ENCODE measurements at regions of chr14 and their contacts with region 1.

Region 1: GRCh38 chr14:91996948-91997371 is 42.9 kb downstream of the TRIP11 start:
- DNase-seq: peak; percentile 26
- H3K4me3 ChIP-seq: no peak overlapping the region
- H3K27ac ChIP-seq: no peak overlapping the region
- H3K27me3 ChIP-seq: no peaks in the 10 kb centered on the region
- CTCF ChIP-seq: peak; percentile 78

Region 2: DNA sequence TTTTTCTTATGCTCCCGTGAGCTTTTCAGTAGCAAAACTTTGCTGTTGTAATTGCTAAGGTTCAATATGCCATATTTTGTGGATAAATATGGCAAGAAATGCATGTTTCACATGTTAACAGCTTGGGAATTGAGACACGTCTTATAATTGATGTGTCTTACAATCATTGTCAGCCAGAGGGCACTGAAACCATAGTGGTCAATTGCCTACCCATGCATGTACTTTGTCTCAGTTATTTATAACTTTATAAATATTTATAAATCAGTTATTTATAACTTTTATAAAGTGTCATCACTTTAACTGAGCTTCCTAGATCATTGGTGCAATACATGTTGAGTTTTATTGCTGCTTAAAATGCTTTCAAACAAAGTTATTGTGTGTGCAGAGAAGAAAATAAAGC is 347.0 kb before region 1 on chr14:
- CTCF ChIA-PET with region 1: interaction called, 12 read pairs
- POLR2A ChIA-PET with region 1: no interaction called
- DNase-seq: no peak
- H3K4me3 ChIP-seq: no peak overlapping the region
- H3K27ac ChIP-seq: no peak overlapping the region
- H3K27me3 ChIP-seq: no peaks in the 10 kb centered on the region
- CTCF ChIP-seq: peak; percentile 40

Region 3: GRCh38 chr14:91947471-91948184 is 49.3 kb before region 1 on chr14 and contains the start of gene FBLN5:
- CTCF ChIA-PET with region 1: interaction called, 51 read pairs
- POLR2A ChIA-PET with region 1: interaction called, 22 read pairs
- DNase-seq: peak; percentile 74
- H3K4me3 ChIP-seq: peak within 1 kb of the TSS; percentile 78
- H3K27ac ChIP-seq: peak within 1 kb of the TSS; percentile 80
- H3K27me3 ChIP-seq: no peaks in the 10 kb centered on the region
- CTCF ChIP-seq: no peak
- polyA plus RNA-seq, gene FBLN5: 116 and 176 TPM in 2 replicates

Region 4: GRCh38 chr14:91975763-91976162 is 21.2 kb before region 1 on chr14:
- CTCF ChIA-PET with region 1: interaction called, 25 read pairs
- POLR2A ChIA-PET with region 1: no interaction called
- DNase-seq: no peak
- H3K4me3 ChIP-seq: no peak overlapping the region
- H3K27ac ChIP-seq: no peak overlapping the region
- H3K27me3 ChIP-seq: no peaks in the 10 kb centered on the region
- CTCF ChIP-seq: no peak

Region 5: GRCh38 chr14:92012121-92012748 is 15.3 kb after region 1 on chr14:
- CTCF ChIA-PET with region 1: interaction called, 15 read pairs
- POLR2A ChIA-PET with region 1: no interaction called
- DNase-seq: no peak
- H3K4me3 ChIP-seq: no peak overlapping the region
- H3K27ac ChIP-seq: no peak overlapping the region
- H3K27me3 ChIP-seq: no peaks in the 10 kb centered on the region
- CTCF ChIP-seq: no peak

Region 6: DNA sequence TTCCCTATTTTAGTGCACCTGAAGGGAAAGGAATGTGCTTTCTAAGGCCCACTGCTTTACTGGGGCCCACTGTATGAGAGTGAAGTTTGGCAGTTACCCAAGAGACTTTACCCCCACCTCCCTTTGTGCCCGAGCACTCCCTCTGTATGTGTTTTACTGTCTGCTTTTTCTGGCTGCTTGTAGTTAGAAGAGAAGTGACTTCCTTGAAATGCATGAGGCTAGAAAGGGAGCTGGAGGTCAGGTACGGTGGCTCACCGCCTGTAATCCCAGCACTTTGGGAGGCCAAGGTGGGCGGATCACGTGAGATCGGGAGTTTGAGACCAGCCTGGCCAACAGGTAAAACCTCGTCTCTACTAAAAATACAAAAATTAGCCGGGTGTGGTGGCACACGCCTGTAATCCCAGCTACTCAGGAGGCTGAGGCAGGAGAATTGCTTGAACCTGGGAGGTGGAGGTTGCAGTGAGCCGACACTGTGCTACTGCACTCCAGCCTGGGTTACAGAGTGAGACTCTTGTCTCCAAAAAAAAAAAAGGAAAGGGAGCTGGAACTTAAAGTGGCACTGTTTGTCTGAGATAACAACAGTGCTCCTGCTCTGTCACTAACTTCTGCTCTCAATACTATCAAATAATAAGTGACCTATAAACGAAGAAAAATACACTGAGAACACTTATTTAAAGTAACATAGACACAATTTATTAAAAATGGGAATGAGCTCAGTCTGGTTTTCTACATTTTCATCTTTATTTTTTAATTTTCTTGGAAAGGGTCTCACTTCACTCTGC is 37.1 kb after region 1 on chr14:
- CTCF ChIA-PET with region 1: interaction called, 12 read pairs
- POLR2A ChIA-PET with region 1: no interaction called
- DNase-seq: no peak
- H3K4me3 ChIP-seq: no peak overlapping the region
- H3K27ac ChIP-seq: no peak overlapping the region
- H3K27me3 ChIP-seq: no peaks in the 10 kb centered on the region
- CTCF ChIP-seq: no peak

Measured in AG04450 (cell line).